Common myeloid progenitor, CD34-positive (primary cell): ENCODE measurements at regions of chr5 and their contacts with region 1.

Region 1: DNA sequence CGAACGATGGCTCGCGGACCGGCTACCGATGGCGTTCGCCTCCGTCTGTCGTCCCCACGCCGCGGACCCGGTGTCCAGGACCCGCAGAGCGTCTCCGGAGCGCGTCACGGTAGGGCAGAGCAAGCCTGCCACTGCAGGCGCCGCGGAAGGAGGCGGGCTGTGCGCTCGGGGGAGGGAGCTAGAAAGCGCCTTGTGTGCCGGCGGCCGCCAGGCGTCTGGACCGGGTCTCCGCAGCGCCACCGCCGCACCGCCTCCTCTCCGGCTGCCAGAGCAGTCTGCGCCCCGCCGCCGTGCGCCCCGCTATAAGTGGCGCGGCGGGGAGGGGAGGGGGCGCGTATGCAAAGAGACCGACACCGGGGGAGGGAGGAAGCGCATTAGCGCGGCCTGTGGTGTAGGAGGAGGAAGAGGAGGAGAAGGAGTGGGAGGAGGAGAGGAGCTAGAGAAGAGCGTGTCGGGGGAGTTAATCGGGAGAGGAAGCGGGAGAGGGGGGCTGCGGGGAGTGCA is at the start of gene ENC1:
- DNase-seq: peak; percentile 85 to 95 (median 93)
- H3K4me3 ChIP-seq: peak within 1 kb of the TSS; percentile 37 to 84 (median 80)
- H3K27ac ChIP-seq: no peak within 1 kb of the TSS
- H3K4me1 ChIP-seq: peaks cover 11 to 46% (median 27%) of the 10 kb centered on the region in 4 experiments
- H3K27me3 ChIP-seq: no peaks in the 10 kb centered on the region

Region 2: GRCh38 chr5:73902327-73903051 is 738.0 kb before region 1 on chr5:
- CTCF ChIA-PET with region 1: interaction called, 34 read pairs
- POLR2A ChIA-PET with region 1: no interaction called
- DNase-seq: peak; percentile 68 to 87 (median 84)
- H3K4me3 ChIP-seq: no peak overlapping the region
- H3K27ac ChIP-seq: no peak overlapping the region
- H3K4me1 ChIP-seq: peaks cover 3 to 12% (median 8%) of the 10 kb centered on the region in 4 experiments
- H3K27me3 ChIP-seq: no peaks in the 10 kb centered on the region

Region 3: GRCh38 chr5:74212336-74212735 is 428.2 kb before region 1 on chr5:
- CTCF ChIA-PET with region 1: interaction called, 37 read pairs
- POLR2A ChIA-PET with region 1: no interaction called
- DNase-seq: peak; percentile 67 to 82 (median 75)
- H3K4me3 ChIP-seq: no peak overlapping the region
- H3K27ac ChIP-seq: no peak overlapping the region
- H3K4me1 ChIP-seq: no peaks in the 10 kb centered on the region
- H3K27me3 ChIP-seq: peaks cover 0 to 1% (median 0%) of the 10 kb centered on the region in 5 experiments

Region 4: GRCh38 chr5:74394916-74395781 is 245.4 kb before region 1 on chr5:
- CTCF ChIA-PET with region 1: interaction called, 51 read pairs
- POLR2A ChIA-PET with region 1: interaction called, 4 read pairs
- DNase-seq: peak; percentile 11 to 27 (median 20)
- H3K4me3 ChIP-seq: no peak overlapping the region
- H3K27ac ChIP-seq: no peak overlapping the region
- H3K4me1 ChIP-seq: peaks cover 0 to 6% (median 5%) of the 10 kb centered on the region in 4 experiments
- H3K27me3 ChIP-seq: no peaks in the 10 kb centered on the region

Region 5: DNA sequence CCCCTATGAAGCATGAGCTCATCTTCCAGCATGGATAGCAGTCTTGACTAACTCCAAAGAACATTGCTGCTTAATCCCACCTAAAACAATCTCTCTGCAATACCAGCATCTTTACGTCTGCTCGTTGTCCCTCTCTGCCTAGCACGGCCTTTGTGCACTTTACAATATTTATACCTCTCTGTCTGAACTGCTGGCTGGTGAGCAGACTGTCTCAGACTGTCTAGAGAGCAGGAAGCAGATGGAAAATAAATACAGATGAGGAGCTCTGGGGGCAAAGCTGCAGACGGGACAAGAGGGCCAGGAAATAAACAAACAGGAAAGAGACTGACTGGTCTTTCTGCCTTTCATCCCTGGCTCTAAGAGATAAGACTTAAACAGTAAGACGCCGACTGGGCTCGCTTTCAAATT is 224.8 kb before region 1 on chr5:
- CTCF ChIA-PET with region 1: interaction called, 5 read pairs
- POLR2A ChIA-PET with region 1: interaction called, 12 read pairs
- DNase-seq: peak; percentile 70 to 97 (median 92)
- H3K4me3 ChIP-seq: peak overlapping the region in 2 of 7 experiments; percentile 19 to 33
- H3K27ac ChIP-seq: no peak overlapping the region
- H3K4me1 ChIP-seq: peaks cover 5 to 24% (median 15%) of the 10 kb centered on the region in 4 experiments
- H3K27me3 ChIP-seq: no peaks in the 10 kb centered on the region

Region 6: GRCh38 chr5:74613283-74613682 is 27.2 kb before region 1 on chr5:
- CTCF ChIA-PET with region 1: interaction called, 10 read pairs
- POLR2A ChIA-PET with region 1: no interaction called
- DNase-seq: peak in 2 of 3 donors; percentile 63 to 72
- H3K4me3 ChIP-seq: no peak overlapping the region
- H3K27ac ChIP-seq: no peak overlapping the region
- H3K4me1 ChIP-seq: no peaks in the 10 kb centered on the region
- H3K27me3 ChIP-seq: no peaks in the 10 kb centered on the region